ENCODE measurements at regions of chr17 and their contacts with region 1.

Region 1: DNA sequence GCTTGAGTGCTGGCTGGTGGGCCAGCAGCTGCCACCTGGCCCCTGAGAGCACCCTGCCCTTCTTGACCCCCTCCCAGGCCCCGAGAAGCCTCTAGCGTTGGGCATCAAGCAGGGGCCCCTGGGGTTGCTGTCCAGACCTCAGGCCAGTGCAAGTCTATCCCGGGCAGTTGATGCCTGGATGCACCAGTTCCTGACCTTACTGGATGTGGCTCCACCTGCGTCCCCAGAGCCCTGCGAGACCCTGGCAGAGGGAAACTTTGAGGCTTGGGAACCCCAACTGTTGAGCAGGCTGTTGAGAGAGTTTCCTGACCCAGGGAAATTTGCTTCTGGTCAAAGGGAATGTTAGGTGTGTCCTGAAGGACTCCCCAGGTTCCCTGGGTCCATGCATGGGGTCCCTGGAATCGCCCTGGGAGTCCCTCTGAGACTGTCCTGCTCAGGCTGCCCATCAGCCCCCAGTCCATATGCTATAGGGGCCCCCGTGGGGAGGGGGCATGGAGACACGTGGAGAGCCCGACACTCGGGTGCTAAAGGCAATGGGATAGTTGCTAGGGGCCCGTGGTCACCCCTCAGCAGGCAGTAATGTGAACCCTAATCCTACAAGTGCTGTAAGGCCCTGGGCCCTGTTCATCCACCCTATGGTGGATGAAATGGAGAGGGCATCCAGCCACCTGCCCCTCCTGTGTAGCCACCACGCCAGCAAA is 46.4 kb downstream of the RAB11FIP4 start:
- DNase-seq: no peak
- H3K4me3 Mint-ChIP-seq: no peak overlapping the region
- H3K27ac Mint-ChIP-seq: no peak overlapping the region
- H3K4me1 Mint-ChIP-seq: no peaks in the 10 kb centered on the region
- H3K27me3 Mint-ChIP-seq: peaks cover 34% of the 10 kb centered on the region
- CTCF ChIP-seq: no peak

Region 2: DNA sequence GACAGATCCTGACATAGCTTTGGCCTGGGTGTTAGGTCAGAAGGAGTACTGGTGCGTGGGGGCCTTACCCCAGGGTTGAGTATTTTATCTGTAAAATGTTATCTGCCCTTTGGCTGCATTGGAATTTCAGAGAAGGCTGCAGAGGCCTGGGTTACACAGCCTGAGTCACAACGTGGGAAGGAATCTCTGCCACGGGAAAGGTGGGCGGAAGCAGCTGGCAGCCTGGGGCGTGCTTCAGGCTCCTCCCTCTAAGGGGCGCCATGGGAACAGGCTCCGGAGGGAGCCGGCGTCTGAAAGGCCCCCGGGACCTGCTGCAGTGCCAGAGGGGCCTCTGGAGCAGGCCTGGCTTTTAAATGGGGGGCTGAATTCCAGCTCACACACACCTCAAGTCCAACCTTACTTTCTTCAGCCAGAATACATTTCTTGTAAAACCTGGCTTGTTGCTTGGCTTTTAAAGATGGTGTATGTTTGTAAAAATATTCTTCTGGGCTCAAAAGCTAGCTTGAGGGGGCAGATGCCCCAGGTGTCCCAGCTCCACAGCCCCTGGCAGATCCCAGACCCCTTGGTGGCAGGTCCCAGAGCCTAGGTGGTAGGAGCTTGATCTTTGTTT is 95.8 kb after region 1 on chr17:
- CTCF ChIA-PET with region 1: interaction called, 10 read pairs
- POLR2A ChIA-PET with region 1: no interaction called
- intact Hi-C with region 1: no loop called
- DNase-seq: peak; percentile 70
- H3K4me3 Mint-ChIP-seq: no peak overlapping the region
- H3K27ac Mint-ChIP-seq: no peak overlapping the region
- H3K4me1 Mint-ChIP-seq: peaks cover 10% of the 10 kb centered on the region
- H3K27me3 Mint-ChIP-seq: no peaks in the 10 kb centered on the region
- CTCF ChIP-seq: no peak

Measured in MCF 10A (cell line).